ENCODE measurements at regions of chr22 and their contacts with region 1.

Region 1: GRCh38 chr22:18077639-18078328 is at the start of gene PEX26:
- DNase-seq: peak; percentile 85
- ATAC-seq: peak; percentile 95
- H3K4me3 ChIP-seq: peak within 1 kb of the TSS; percentile 98
- H3K27ac ChIP-seq: peak within 1 kb of the TSS; percentile 73
- H3K4me1 ChIP-seq: peaks cover 24% of the 10 kb centered on the region
- H3K27me3 ChIP-seq: no peaks in the 10 kb centered on the region
- CTCF ChIP-seq: no peak
- total RNA-seq, gene PEX26: 30.6 and 51.3 TPM in 2 replicates

Region 2: GRCh38 chr22:17897426-17897825 is 180.4 kb before region 1 on chr22:
- CTCF ChIA-PET with region 1: no interaction called
- POLR2A ChIA-PET with region 1: no interaction called
- intact Hi-C with region 1: loop called (anchors 5 kb)
- DNase-seq: no peak
- ATAC-seq: no peak
- H3K4me3 ChIP-seq: no peak overlapping the region
- H3K27ac ChIP-seq: no peak overlapping the region
- H3K4me1 ChIP-seq: no peaks in the 10 kb centered on the region
- H3K27me3 ChIP-seq: no peaks in the 10 kb centered on the region
- CTCF ChIP-seq: no peak

Region 3: DNA sequence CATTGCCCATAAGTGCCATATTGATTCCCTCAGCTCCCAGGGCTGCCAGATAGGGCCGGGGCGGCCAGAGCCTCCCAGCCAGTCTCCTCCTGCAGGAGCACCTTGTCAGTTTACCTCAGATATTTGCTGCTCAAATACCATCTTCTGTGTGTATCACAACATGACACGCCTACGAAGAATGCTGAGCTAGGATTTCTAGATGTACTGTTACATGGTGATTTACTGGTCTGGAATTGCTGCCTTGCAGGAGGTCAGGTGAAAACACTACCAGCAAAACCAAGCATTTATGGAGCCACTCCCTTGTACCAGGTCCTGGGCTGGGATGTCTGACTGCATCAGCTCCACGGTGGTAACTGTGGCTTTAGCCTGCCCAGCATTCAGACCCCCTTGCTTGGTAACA is 65.3 kb before region 1 on chr22:
- CTCF ChIA-PET with region 1: interaction called, 10 read pairs
- POLR2A ChIA-PET with region 1: no interaction called
- intact Hi-C with region 1: no loop called
- DNase-seq: peak; percentile 81
- ATAC-seq: peak; percentile 77
- H3K4me3 ChIP-seq: no peak overlapping the region
- H3K27ac ChIP-seq: no peak overlapping the region
- H3K4me1 ChIP-seq: peaks cover 15% of the 10 kb centered on the region
- H3K27me3 ChIP-seq: no peaks in the 10 kb centered on the region
- CTCF ChIP-seq: no peak

Region 4: DNA sequence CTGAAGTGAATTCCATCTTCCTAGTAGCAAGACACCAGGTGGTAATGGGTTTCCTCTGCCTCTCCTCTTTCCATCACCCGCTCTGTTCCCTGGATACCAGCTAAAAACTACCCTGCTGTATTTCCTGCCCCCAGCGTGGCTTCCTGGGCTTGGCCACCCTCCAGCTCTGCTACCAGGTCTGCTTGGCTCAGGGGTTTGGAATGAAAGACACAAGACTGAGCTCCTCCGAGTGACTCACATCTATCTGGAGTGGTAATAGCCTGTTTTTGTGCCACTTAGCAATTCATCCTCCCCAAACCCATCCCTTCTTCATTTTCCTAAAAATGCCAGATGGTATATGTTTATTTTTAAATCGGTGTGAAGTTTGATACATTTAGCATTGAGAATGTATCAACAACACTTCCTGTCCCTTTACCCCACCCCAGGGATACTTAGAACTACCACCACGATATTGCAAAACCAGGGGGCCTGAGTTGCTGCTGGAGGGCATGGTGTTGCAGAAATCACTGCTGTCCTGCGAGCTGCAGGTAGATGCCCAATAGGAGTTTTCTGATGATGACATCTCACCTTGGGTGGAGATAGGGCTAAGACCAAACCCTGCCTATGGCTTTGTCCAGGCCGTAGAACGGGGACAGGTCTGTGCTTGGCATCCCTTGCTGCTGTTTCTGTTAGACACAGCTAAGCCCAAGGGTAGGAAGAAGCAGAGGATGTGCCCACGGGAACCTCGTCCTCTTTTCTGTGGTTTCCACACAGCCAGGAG is 45.9 kb before region 1 on chr22:
- CTCF ChIA-PET with region 1: interaction called, 6 read pairs
- POLR2A ChIA-PET with region 1: interaction called, 7 read pairs
- intact Hi-C with region 1: loop called (anchors 2 kb)
- DNase-seq: peak; percentile 95
- ATAC-seq: peak; percentile 82
- H3K4me3 ChIP-seq: peak overlapping the region; percentile 61
- H3K27ac ChIP-seq: peak overlapping the region; percentile 97
- H3K4me1 ChIP-seq: peaks cover 49% of the 10 kb centered on the region
- H3K27me3 ChIP-seq: no peaks in the 10 kb centered on the region
- CTCF ChIP-seq: no peak

Region 5: GRCh38 chr22:18152519-18152918 is 74.7 kb after region 1 on chr22:
- CTCF ChIA-PET with region 1: no interaction called
- POLR2A ChIA-PET with region 1: interaction called, 19 read pairs
- intact Hi-C with region 1: no loop called
- DNase-seq: no peak
- ATAC-seq: no peak
- H3K4me3 ChIP-seq: no peak overlapping the region
- H3K27ac ChIP-seq: no peak overlapping the region
- H3K4me1 ChIP-seq: peaks cover 8% of the 10 kb centered on the region
- H3K27me3 ChIP-seq: no peaks in the 10 kb centered on the region
- CTCF ChIP-seq: no peak